OCI-LY7 (cell line): ENCODE measurements at regions of chr6 and their contacts with region 1.

Region 1: DNA sequence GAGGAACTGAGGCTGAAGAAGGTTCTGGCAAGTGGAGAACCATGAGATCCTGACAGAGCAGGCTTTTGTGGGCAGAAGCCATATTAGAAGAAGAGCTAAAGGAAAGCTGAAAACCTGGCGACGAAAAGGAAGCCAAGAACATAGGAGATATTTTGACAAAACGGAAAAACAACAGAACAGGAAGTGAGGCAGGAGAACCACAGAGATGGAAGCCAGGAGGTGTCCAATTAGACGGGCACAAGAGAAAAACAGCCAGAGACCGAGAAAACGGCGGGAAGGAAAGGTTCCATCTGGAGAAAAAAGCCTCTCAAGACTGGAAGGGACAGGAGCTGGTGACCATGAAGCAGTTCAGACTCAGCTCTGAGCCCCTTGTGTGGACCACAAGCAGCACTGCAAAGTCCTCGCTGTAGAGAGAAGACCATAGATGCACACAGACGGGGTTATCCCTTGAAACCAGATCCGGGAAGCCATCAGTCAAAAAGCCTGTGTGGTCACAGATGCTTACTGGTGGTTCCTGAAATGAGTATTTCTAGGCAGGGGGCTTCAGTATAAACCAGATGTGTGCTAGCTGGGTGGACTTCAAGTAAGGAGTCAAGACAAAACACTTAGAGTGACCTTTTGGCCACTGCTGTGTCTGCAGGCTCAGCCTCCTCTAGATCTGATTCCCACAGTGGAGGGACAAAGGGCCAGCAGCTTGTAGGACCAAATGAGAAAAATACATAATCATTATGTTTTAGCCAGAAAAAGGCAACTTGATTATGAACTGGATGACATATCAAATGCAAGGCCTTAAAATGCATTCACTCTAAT is 30.7 kb downstream of the SSR1 start:
- DNase-seq: no peak
- H3K4me3 ChIP-seq: no peak overlapping the region
- H3K27ac ChIP-seq: no peak overlapping the region
- H3K4me1 ChIP-seq: peaks cover 18% of the 10 kb centered on the region
- CTCF ChIP-seq: no peak

Region 2: DNA sequence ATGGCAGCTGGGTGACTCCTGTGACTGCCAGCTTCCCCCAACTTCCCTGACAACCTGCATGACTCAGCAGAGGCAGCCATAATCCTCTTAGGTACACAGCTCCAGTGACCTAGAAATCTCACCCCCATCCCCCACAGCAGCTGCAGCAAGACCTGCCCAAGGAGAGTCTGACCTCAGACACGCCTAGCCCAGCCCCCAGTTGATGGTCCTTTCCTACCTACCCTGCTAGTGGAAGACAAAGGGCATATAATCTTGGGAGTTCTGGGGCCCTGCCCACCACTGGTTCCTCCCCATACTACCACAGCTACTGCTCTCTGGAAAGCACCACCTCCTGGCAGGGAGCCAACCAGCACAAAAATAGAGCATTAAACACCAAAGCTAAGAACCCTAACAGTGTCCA is 1052.0 kb before region 1 on chr6:
- CTCF ChIA-PET with region 1: no interaction called
- POLR2A ChIA-PET with region 1: no interaction called
- intact Hi-C with region 1: no loop called
- DNase-seq: peak; percentile 44
- H3K4me3 ChIP-seq: peak overlapping the region; percentile 2
- H3K27ac ChIP-seq: no peak overlapping the region
- H3K4me1 ChIP-seq: peaks cover 15% of the 10 kb centered on the region
- CTCF ChIP-seq: no peak; the same call in 1 of the 2 replicates

Region 3: DNA sequence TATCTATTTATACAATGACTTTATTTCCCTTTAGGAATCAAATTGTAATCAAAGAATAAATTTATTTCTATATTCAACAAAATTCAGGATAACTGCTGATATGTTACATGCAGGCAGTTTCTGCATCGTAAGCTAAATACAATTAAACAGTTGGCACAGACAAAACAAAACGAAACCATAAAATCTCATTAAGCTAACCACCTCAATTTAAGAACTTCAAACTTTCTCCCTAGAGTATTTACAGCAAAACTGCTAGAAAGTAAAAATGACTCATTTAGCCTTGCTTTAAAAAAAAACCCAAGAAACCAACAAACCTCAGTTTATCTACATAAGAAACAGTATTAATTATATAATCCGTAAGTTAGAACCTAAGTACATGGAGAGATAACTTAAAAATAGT is 13.6 kb after region 1 on chr6:
- CTCF ChIA-PET with region 1: no interaction called
- POLR2A ChIA-PET with region 1: interaction called, 11 read pairs
- intact Hi-C with region 1: no loop called
- DNase-seq: no peak
- H3K4me3 ChIP-seq: no peak overlapping the region
- H3K27ac ChIP-seq: no peak overlapping the region
- H3K4me1 ChIP-seq: no peaks in the 10 kb centered on the region
- CTCF ChIP-seq: no peak

Region 4: GRCh38 chr6:7389451-7390225 is 107.3 kb after region 1 on chr6 and contains the starts of genes CAGE1 and RIOK1:
- CTCF ChIA-PET with region 1: interaction called, 3 read pairs
- POLR2A ChIA-PET with region 1: interaction called, 9 read pairs
- intact Hi-C with region 1: loop called (anchors 1 kb)
- DNase-seq: peak; percentile 94
- H3K4me3 ChIP-seq: peak within 1 kb of the TSS; percentile 83
- H3K27ac ChIP-seq: peak within 1 kb of the TSS; percentile 84
- H3K4me1 ChIP-seq: peaks cover 21% of the 10 kb centered on the region
- CTCF ChIP-seq: no peak
- total RNA-seq, gene CAGE1: 0.44 and 1.1 TPM in 2 replicates
- total RNA-seq, gene RIOK1: 55.0 and 85.0 TPM in 2 replicates

Region 5: GRCh38 chr6:7589949-7590917 is 307.9 kb after region 1 on chr6 and contains the start of gene SNRNP48:
- CTCF ChIA-PET with region 1: interaction called, 3 read pairs
- POLR2A ChIA-PET with region 1: interaction called, 10 read pairs
- intact Hi-C with region 1: no loop called
- DNase-seq: peak; percentile 95
- H3K4me3 ChIP-seq: peak within 1 kb of the TSS; percentile 88
- H3K27ac ChIP-seq: peak within 1 kb of the TSS; percentile 28
- H3K4me1 ChIP-seq: peaks cover 20% of the 10 kb centered on the region
- CTCF ChIP-seq: no peak
- total RNA-seq, gene SNRNP48: 19.8 and 24.1 TPM in 2 replicates